ENCODE measurements at regions of chr13 and their contacts with region 1.

Region 1: DNA sequence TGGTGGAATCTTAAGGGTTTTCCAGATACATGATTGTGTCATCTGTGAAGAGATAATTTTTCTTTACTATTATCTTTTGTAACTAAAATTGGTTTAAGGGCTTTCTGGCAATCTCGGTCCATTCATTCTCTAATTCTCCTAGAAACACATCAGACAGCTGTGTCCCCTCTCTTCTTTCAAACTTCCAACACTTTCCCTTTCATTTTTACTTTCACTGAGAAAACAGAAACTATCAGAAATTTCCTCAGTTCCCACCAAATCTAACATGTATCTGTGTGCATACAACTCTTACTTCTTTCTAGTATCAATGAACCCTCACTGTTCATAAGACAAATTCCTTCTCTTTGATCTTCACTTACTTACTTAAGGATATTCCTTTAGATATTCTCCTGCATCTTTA is 40.2 kb downstream of the KCNRG start:
- DNase-seq: no peak
- H3K4me3 ChIP-seq: no peak overlapping the region
- H3K27ac ChIP-seq: no peak overlapping the region
- H3K4me1 ChIP-seq: no peaks in the 10 kb centered on the region
- H3K27me3 ChIP-seq: no peaks in the 10 kb centered on the region
- CTCF ChIP-seq: no peak

Region 2: GRCh38 chr13:50006426-50007135 is 48.9 kb before region 1 on chr13:
- intact Hi-C with region 1: loop called (anchors 10 kb)
- DNase-seq: no peak
- H3K4me3 ChIP-seq: no peak overlapping the region
- H3K27ac ChIP-seq: no peak overlapping the region
- H3K4me1 ChIP-seq: no peaks in the 10 kb centered on the region
- H3K27me3 ChIP-seq: no peaks in the 10 kb centered on the region
- CTCF ChIP-seq: no peak